ENCODE measurements at regions of chr12 and their contacts with region 1.

Region 1: GRCh38 chr12:10175846-10176636 is 2.8 kb upstream of the TMEM52B start:
- DNase-seq: no peak
- H3K4me3 ChIP-seq: no peak overlapping the region
- H3K27ac ChIP-seq: no peak overlapping the region
- H3K4me1 ChIP-seq: no peaks in the 10 kb centered on the region
- H3K27me3 ChIP-seq: no peaks in the 10 kb centered on the region
- CTCF ChIP-seq: no peak
- EP300 ChIP-seq: no peak
- POLR2A ChIP-seq: no peak
- RAD21 ChIP-seq: no peak

Region 2: GRCh38 chr12:10094646-10095395 is 81.2 kb before region 1 on chr12:
- CTCF ChIA-PET with region 1: no interaction called
- POLR2A ChIA-PET with region 1: no interaction called
- DNase-seq: no peak
- H3K4me3 ChIP-seq: no peak overlapping the region
- H3K27ac ChIP-seq: no peak overlapping the region
- H3K4me1 ChIP-seq: peaks cover 0 to 7% (median 4%) of the 10 kb centered on the region in 4 experiments; a peak in 5 of 7 replicates
- H3K27me3 ChIP-seq: no peaks in the 10 kb centered on the region
- CTCF ChIP-seq: no peak
- EP300 ChIP-seq: no peak
- POLR2A ChIP-seq: no peak
- RAD21 ChIP-seq: no peak

Region 3: DNA sequence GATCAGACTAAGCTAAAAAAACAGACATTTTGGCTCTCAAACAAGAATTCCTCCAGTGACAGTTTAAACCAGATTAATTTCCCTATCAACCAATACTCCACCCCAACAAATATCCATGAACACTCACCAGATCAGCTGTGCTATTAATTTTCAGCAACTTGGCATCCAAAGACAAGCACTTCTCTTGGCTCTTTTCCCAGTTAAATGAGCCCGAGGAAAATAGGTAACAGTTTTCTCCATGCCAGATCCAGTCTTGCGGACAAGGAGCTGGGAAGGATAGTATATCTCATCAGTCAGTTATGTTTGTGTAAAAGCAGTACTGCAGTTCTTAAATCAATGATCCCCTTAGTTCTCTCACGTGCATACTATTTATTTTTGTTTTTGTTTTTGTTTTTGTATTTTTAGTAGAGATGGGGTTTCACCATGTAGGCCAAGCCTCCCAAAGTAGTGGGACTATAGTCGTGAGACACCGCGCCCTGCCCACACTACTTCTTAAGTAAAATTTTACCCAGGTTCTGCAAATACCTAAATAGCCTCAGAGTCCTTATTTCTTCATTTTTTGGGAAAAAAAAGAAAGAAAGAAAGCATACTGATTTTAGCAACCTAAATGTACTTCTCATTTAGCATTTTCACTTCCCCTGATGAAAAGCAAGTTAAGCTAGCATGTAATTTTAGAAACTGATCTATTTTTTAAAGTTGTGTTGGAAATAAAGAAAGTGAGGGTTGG is 15.2 kb before region 1 on chr12:
- CTCF ChIA-PET with region 1: no interaction called
- POLR2A ChIA-PET with region 1: no interaction called
- DNase-seq: no peak
- H3K4me3 ChIP-seq: no peak overlapping the region
- H3K27ac ChIP-seq: no peak overlapping the region
- H3K4me1 ChIP-seq: no peaks in the 10 kb centered on the region
- H3K27me3 ChIP-seq: no peaks in the 10 kb centered on the region
- CTCF ChIP-seq: no peak
- EP300 ChIP-seq: no peak
- POLR2A ChIP-seq: no peak
- RAD21 ChIP-seq: no peak

Region 4: GRCh38 chr12:10190558-10191388 is 14.7 kb after region 1 on chr12:
- CTCF ChIA-PET with region 1: interaction called, 10 read pairs
- POLR2A ChIA-PET with region 1: no interaction called
- DNase-seq: peak in 1 of 2 experiments; percentile 53
- H3K4me3 ChIP-seq: no peak overlapping the region
- H3K27ac ChIP-seq: no peak overlapping the region
- H3K4me1 ChIP-seq: 0 out of 7 replicates have a peak, but pooled peaks cover 0 to 2% (median 0%) of the 10 kb centered on the region in 4 experiments
- H3K27me3 ChIP-seq: no peaks in the 10 kb centered on the region
- CTCF ChIP-seq: peak; percentile 50 to 83 (median 74)
- EP300 ChIP-seq: no peak
- POLR2A ChIP-seq: no peak
- RAD21 ChIP-seq: peak; percentile 77 to 80

Region 5: GRCh38 chr12:10214136-10214900 is 38.3 kb after region 1 on chr12:
- CTCF ChIA-PET with region 1: no interaction called
- POLR2A ChIA-PET with region 1: no interaction called
- DNase-seq: no peak
- H3K4me3 ChIP-seq: peak overlapping the region; percentile 66 to 97 (median 88)
- H3K27ac ChIP-seq: no peak overlapping the region
- H3K4me1 ChIP-seq: peaks cover 0 to 10% (median 3%) of the 10 kb centered on the region in 4 experiments; a peak in 5 of 7 replicates
- H3K27me3 ChIP-seq: no peaks in the 10 kb centered on the region
- CTCF ChIP-seq: no peak
- EP300 ChIP-seq: no peak
- POLR2A ChIP-seq: no peak
- RAD21 ChIP-seq: no peak

Region 6: GRCh38 chr12:10361084-10361483 is 185.0 kb after region 1 on chr12:
- CTCF ChIA-PET with region 1: no interaction called
- POLR2A ChIA-PET with region 1: no interaction called
- DNase-seq: peak in 1 of 2 experiments; percentile 29
- H3K4me3 ChIP-seq: no peak overlapping the region; a peak in 1 of 8 replicates
- H3K27ac ChIP-seq: no peak overlapping the region
- H3K4me1 ChIP-seq: peaks cover 12 to 30% (median 17%) of the 10 kb centered on the region in 4 experiments; a peak in 6 of 7 replicates
- H3K27me3 ChIP-seq: no peaks in the 10 kb centered on the region
- CTCF ChIP-seq: no peak
- EP300 ChIP-seq: no peak
- POLR2A ChIP-seq: no peak; a peak in 1 of 3 replicates
- RAD21 ChIP-seq: no peak